ENCODE measurements at regions of chr11 and their contacts with region 1.

Region 1: GRCh38 chr11:75388386-75389275 is 10.7 kb upstream of the RPS3 start:
- DNase-seq: peak in 1 of 2 donors; percentile 85
- H3K4me3 ChIP-seq: no peak overlapping the region
- H3K27ac ChIP-seq: no peak overlapping the region
- H3K4me1 ChIP-seq: no peaks in the 10 kb centered on the region
- H3K27me3 ChIP-seq: no peaks in the 10 kb centered on the region
- CTCF ChIP-seq: peak; percentile 76 to 83 (median 79)

Region 2: GRCh38 chr11:75280227-75280701 is 108.4 kb before region 1 on chr11:
- intact Hi-C with region 1: loop called (anchors 1 kb)
- DNase-seq: peak; percentile 9 to 85
- H3K4me3 ChIP-seq: no peak overlapping the region
- H3K27ac ChIP-seq: no peak overlapping the region
- H3K4me1 ChIP-seq: no peaks in the 10 kb centered on the region
- H3K27me3 ChIP-seq: no peaks in the 10 kb centered on the region
- CTCF ChIP-seq: peak; percentile 93 to 96 (median 94)

Region 3: DNA sequence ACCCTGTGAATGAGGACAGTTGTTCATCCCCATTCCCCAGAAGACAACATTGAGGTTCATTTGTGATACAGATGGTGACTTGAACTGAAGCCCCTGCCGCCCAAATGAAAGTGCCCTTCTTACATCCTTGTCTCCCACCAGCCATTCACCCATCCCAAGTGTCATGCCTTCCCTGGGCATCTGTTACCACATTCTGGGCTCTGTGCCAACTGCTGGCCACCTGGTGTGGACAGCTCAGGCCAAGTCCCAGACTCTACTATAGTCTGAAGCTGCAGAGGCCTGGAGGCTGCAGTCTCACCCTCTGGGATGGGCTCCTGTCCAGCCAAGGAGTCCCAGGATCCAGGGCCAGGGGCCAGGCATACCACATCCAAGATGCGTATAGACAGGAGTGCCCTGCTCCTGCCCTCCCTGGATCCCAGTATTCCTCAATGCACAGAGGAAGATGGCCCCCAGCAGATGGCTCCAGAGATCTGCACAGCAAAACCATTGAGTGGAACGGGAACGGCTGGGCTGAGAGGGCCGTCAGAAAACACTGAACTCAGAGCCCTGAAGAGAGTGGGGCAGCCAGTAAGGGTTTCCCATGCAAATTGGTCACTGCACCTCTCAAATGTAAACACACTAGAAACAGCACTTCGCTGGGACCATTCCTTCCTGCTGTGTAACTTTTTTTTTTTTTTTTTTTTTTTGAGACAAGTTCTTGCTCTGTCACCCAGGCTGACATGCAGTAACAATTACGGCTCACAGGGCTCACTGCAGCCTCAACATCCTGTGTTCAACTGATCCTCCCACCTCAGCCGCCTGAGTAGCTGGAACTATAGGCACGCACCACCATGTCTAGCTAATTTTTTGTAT is 60.0 kb before region 1 on chr11:
- intact Hi-C with region 1: loop called (anchors 1 kb)
- DNase-seq: peak in 1 of 2 donors; percentile 78
- H3K4me3 ChIP-seq: no peak overlapping the region
- H3K27ac ChIP-seq: no peak overlapping the region
- H3K4me1 ChIP-seq: peaks cover 0 to 4% of the 10 kb centered on the region in 2 donors
- H3K27me3 ChIP-seq: no peaks in the 10 kb centered on the region
- CTCF ChIP-seq: peak in 2 of 3 experiments; percentile 56 to 57

Region 4: GRCh38 chr11:75532200-75533048 is 143.8 kb after region 1 on chr11:
- intact Hi-C with region 1: loop called (anchors 1 kb)
- DNase-seq: peak in 1 of 2 donors; percentile 85
- H3K4me3 ChIP-seq: no peak overlapping the region
- H3K27ac ChIP-seq: no peak overlapping the region
- H3K4me1 ChIP-seq: no peaks in the 10 kb centered on the region
- H3K27me3 ChIP-seq: no peaks in the 10 kb centered on the region
- CTCF ChIP-seq: peak; percentile 76 to 91 (median 90)

Measured in ascending aorta (tissue), 2 donors.